Dorsolateral prefrontal cortex (tissue), 120 donors: ENCODE measurements at regions of chr16 and their contacts with region 1.

Region 1: DNA sequence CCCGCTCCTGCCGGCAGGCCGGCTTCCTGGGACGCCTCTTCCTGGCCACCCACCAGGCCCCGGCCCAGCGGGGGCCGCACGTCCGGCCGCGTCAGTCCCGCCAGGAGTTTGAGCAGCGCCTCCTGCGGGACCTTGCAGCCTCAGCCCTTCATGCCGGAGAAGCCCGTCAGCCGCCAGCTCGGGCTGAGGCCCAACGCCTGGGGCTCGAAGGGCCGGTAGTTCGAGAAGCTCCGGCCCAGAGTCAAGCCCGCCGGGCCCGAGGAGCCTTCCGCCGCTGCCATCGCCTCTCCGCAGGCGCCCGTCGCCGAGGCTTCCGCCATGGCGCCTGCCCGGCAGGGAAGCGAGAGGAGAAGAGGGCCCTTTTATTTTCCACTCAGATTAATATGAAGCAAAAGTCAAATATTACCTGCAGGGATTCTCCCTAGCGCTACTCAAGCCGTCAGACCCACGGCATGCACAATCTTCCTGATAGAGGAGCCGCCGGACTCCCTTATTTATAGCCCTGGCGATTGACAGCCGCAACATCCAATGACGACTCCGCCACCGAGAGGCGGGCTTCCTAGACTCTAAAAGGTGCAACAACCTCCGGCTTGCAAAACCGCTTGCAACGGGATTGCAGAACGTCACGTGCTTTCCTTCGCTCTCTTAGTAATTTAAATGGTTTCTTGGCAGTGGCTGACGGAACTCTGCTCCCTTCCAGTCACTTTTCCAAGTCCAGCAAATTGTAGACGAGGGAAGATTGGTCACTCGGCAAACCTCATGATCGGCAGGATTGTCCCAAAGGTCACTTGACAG is at the start of gene SEPHS2:
- DNase-seq: peak; percentile 93 to 99 (median 96)
- H3K4me3 ChIP-seq: peak within 1 kb of the TSS; percentile 70 to 100 (median 94)
- H3K27ac ChIP-seq: peak within 1 kb of the TSS; percentile 21 to 98 (median 93)
- H3K27me3 ChIP-seq: no peaks in the 10 kb centered on the region
- CTCF ChIP-seq: peak in 47 of 56 donors; percentile 2 to 62 (median 36)
- total RNA-seq, gene SEPHS2: 16.0 to 51.0 (median 28.6) TPM

Region 2: DNA sequence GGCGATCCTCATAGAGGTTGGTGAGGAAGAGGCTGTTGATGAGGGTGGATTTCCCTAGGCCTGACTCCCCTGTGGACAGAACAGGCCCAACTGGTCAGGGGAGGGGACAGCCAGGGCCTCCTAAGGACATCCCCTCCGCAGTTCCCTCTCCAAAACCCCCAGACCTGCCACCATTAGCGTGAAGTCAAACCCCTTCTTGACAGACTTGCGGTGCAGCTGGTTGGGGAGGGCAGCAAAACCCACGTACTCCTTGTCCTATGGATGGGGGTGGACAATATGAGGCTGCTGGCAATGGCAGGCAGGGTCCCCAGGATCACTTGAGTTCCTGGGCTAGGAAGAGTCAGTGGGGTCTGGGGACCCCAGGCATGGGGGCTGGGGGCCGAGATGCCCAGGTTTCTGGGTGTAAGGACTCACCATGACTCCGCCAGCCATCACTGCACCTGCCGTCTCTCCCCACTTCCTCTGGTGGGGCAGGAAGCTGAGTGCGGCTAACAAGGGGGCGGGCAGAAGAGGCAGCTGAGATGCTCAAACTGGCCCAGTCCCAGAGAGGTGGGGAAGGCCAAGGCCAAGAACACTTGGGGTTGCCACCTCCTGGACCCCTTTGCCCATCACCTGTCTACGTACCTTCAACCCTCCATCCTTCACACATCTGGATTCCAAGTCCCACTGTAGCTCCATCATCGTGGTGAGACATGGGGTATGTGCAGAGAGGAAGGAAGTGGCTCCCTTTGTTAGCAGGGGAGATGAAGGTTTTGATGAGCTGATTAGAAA is 63.3 kb before region 1 on chr16 and contains the start of gene SEPTIN1:
- intact Hi-C with region 1: no loop called
- DNase-seq: no peak
- H3K4me3 ChIP-seq: no peak within 1 kb of the TSS
- H3K27ac ChIP-seq: peak within 1 kb of the TSS in 23 of 59 donors; percentile 1 to 51 (median 26)
- H3K27me3 ChIP-seq: no peaks in the 10 kb centered on the region
- CTCF ChIP-seq: no peak
- total RNA-seq, gene SEPTIN1: 1.6 to 8.3 (median 4.0) TPM

Region 3: GRCh38 chr16:30417529-30418349 is 27.9 kb before region 1 on chr16:
- intact Hi-C with region 1: loop called in 1 of 2 experiments (anchors 2 kb)
- DNase-seq: peak; percentile 48 to 85 (median 73)
- H3K4me3 ChIP-seq: peak overlapping the region; percentile 43 to 75 (median 64)
- H3K27ac ChIP-seq: peak overlapping the region; percentile 25 to 95 (median 89)
- H3K27me3 ChIP-seq: no peaks in the 10 kb centered on the region
- CTCF ChIP-seq: peak in 36 of 56 donors; percentile 8 to 48 (median 29)

Region 4: DNA sequence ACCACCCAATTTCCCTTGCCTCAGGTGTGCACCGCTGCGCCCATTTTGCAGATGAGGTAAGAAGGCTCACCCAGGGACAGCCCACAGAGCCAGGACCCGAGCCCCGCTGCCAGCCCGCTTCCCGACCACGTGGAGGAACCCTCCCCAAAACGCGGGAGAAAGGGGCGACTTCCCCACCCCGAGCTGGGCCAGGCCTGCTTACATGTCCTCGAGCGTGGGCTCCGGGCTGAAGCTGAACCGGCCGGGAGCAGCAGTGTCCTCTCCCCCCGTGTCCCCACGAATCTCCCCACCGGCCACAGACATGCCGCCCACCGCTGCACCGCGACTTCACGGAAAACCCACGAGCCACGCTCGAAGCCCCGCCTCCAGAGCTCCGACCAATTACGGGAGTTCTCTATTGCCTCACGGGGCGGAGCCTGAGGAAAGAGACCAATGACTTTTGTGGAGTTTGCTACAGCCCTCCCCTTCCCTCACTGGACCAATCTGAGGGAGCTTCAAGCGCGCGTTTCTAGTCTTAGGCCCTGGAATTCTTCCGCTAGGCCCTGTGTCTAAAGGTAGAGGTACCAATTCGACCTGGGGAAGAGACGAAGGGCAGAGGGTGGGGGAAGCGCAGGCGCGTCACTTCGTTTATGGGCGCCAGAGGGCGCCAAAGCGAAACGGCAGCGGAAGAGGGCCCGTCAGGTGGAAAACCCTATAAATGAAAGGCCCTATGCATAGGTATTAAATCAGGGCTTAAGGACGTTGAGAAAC is 15.8 kb before region 1 on chr16 and contains the start of gene DCTPP1:
- intact Hi-C with region 1: loop called in 1 of 2 experiments (anchors 1 kb)
- DNase-seq: peak; percentile 83 to 96 (median 94)
- H3K4me3 ChIP-seq: peak within 1 kb of the TSS; percentile 56 to 91 (median 78)
- H3K27ac ChIP-seq: peak within 1 kb of the TSS in 56 of 59 donors; percentile 5 to 90 (median 75)
- H3K27me3 ChIP-seq: no peaks in the 10 kb centered on the region
- CTCF ChIP-seq: peak; percentile 41 to 87 (median 70)
- total RNA-seq, gene DCTPP1: 10.5 to 35.8 (median 21.2) TPM

Region 5: DNA sequence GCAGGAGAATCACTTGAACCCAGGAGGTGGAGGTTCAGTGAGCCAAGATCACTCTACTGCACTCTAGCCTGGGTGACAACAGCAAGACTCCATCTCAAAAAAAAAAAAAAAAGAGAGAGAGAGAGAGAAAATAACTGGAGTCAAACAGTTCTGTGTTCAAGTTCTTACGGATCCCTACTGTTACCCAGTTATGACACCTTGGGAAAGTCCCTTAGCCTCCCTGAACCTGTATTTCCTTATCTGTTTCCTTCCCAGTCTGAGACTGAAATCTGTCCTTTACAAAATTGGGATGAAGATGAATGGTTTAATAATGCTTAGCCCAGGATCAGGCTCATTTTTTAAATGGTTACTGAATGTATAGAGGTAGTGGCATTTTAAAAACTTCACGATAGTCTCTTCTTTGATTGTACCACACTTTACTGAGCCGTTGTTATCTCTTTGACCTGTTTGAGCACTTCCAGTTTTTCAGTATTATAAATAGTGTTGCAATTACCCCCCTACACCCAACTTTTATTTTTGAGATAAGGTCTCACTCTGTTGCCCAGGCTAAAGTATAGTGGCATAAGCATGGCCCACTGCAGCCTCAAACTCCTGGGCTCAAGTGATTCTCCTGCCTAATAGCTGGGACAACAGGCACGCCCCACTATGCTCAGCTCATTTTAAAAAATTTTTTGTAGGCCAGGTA is 63.6 kb after region 1 on chr16:
- intact Hi-C with region 1: no loop called
- DNase-seq: no peak
- H3K4me3 ChIP-seq: no peak overlapping the region
- H3K27ac ChIP-seq: no peak overlapping the region
- H3K27me3 ChIP-seq: no peaks in the 10 kb centered on the region
- CTCF ChIP-seq: no peak